PC-3 (cell line): ENCODE measurements at regions of chr12 and their contacts with region 1.

Region 1: DNA sequence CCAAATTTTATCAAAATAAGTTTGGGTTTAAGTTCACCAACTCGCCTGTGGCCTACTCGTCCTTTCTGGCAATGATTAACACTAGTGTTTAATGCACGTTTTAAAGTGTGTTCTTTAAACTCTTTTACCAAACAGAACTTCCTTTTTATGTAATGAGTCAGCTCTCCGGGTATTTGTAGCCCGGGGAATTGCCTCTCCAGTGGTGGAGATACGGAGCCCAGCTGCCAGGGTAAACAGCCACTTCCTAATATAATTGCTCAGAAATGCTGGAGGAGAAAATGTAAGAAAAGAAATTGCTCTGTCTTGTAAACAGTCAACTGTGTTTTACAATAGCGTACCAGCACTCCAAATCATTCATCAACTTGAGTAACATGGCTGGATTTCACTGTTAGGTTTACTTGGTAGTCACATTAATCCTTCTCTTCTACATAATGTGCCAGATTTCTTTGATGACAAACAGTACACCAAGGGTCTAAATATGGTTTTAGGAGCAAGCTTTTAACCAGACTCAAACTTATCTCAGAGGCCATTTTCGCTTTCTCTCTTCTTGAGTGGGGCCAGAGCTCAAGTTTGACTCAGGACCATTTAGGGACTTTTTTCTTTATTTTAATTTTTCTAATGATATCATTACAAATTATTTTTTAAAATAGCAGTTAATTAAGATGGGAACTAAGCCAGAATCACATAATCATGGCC is 101.2 kb upstream of the SLC38A2 start:
- DNase-seq: peak; percentile 95
- ATAC-seq: peak; percentile 85
- H3K4me3 ChIP-seq: peak overlapping the region; percentile 52; the same call in 1 of the 2 replicates
- H3K27ac ChIP-seq: peak overlapping the region; percentile 83
- H3K4me1 ChIP-seq: peaks cover 59% of the 10 kb centered on the region
- H3K27me3 ChIP-seq: no peaks in the 10 kb centered on the region
- CTCF ChIP-seq: no peak

Region 2: GRCh38 chr12:46492471-46493351 is 18.9 kb after region 1 on chr12:
- CTCF ChIA-PET with region 1: no interaction called
- POLR2A ChIA-PET with region 1: no interaction called
- intact Hi-C with region 1: loop called (anchors 2 kb)
- DNase-seq: peak; percentile 89
- ATAC-seq: peak; percentile 53
- H3K4me3 ChIP-seq: no peak overlapping the region
- H3K27ac ChIP-seq: peak overlapping the region; percentile 43
- H3K4me1 ChIP-seq: peaks cover 48% of the 10 kb centered on the region
- H3K27me3 ChIP-seq: no peaks in the 10 kb centered on the region
- CTCF ChIP-seq: no peak

Region 3: DNA sequence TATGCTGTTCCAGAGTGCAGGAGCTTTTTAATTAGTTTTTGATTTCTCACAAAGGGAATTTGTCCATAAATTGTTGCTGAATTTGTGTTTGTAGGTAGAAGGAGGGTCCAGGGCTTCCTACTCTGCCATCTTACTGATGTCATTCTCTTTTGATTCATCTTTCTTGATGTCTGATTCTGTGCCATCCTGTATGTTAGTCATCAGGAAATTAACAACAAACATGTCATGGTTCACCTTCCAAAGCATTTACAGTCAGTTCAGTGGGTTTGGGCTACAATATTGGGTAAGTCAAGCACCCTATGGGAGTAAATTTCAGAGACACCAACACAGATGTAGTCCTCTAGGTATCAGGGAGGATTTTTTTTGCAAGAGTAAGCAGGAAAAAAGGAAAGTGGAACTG is 34.0 kb after region 1 on chr12:
- CTCF ChIA-PET with region 1: no interaction called
- POLR2A ChIA-PET with region 1: no interaction called
- intact Hi-C with region 1: loop called (anchors 1 kb)
- DNase-seq: peak; percentile 48
- ATAC-seq: peak; percentile 60
- H3K4me3 ChIP-seq: no peak overlapping the region
- H3K27ac ChIP-seq: peak overlapping the region; percentile 20; the same call in 1 of the 2 replicates
- H3K4me1 ChIP-seq: peaks cover 10% of the 10 kb centered on the region
- H3K27me3 ChIP-seq: no peaks in the 10 kb centered on the region
- CTCF ChIP-seq: no peak

Region 4: DNA sequence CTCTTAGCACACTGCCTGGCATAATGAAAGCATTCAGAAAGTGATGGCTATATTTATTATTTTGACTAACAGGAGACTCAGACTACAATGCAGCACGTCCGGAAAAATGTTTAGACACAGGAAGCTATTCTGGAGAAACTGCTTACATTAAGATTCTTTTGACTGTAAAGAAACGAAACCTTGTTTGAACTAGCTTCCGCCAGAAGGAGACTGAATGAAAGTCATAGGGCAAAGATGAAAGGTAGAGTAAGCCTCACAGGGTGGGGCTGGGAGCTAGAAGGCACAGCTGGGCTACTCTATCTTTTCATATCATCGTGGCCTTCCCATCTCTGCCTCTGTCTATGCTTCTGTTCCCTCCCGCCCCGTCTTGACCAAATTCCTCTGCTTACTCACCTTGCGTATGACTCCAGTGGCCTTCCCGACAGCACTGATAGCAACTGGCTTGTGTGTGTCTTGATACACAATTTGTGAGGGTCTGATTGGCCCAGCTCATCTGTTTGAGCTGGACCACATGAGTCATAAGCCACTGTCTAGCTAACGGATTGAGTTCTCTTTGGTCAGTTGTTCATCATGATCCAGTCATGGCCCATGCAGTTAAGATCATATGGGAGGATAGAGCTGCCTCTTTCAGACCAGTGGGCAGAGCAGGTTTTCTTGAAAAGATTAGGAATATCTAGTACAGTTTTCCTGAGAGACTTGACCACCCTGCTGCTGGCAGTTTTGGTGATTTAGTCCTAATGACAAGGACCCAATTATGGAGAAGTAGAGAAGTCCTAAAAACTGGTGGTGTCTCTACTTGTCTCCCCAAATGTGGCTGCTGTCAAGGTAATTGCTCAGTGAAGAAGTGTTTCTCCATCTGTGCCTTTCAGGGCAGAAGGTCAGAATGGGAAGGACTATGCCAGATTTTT is 50.3 kb after region 1 on chr12:
- CTCF ChIA-PET with region 1: no interaction called
- POLR2A ChIA-PET with region 1: no interaction called
- intact Hi-C with region 1: loop called (anchors 1 kb)
- DNase-seq: peak; percentile 97
- ATAC-seq: peak; percentile 90
- H3K4me3 ChIP-seq: peak overlapping the region; percentile 61
- H3K27ac ChIP-seq: peak overlapping the region; percentile 75
- H3K4me1 ChIP-seq: peaks cover 36% of the 10 kb centered on the region
- H3K27me3 ChIP-seq: no peaks in the 10 kb centered on the region
- CTCF ChIP-seq: no peak

Region 5: GRCh38 chr12:46556105-46556559 is 82.3 kb after region 1 on chr12:
- CTCF ChIA-PET with region 1: interaction called, 3 read pairs
- POLR2A ChIA-PET with region 1: no interaction called
- intact Hi-C with region 1: loop called (anchors 5 kb)
- DNase-seq: peak; percentile 93
- ATAC-seq: peak; percentile 76
- H3K4me3 ChIP-seq: peak overlapping the region; percentile 41
- H3K27ac ChIP-seq: peak overlapping the region; percentile 96
- H3K4me1 ChIP-seq: peaks cover 87% of the 10 kb centered on the region
- H3K27me3 ChIP-seq: no peaks in the 10 kb centered on the region
- CTCF ChIP-seq: no peak

Region 6: GRCh38 chr12:46661110-46661845 is 187.5 kb after region 1 on chr12:
- CTCF ChIA-PET with region 1: no interaction called
- POLR2A ChIA-PET with region 1: no interaction called
- intact Hi-C with region 1: loop called (anchors 2 kb)
- DNase-seq: peak; percentile 80
- ATAC-seq: peak; percentile 53
- H3K4me3 ChIP-seq: no peak overlapping the region
- H3K27ac ChIP-seq: peak overlapping the region; percentile 56
- H3K4me1 ChIP-seq: peaks cover 57% of the 10 kb centered on the region
- H3K27me3 ChIP-seq: no peaks in the 10 kb centered on the region
- CTCF ChIP-seq: peak; percentile 87